ENCODE measurements at regions of chr7 and their contacts with region 1.

Region 1: DNA sequence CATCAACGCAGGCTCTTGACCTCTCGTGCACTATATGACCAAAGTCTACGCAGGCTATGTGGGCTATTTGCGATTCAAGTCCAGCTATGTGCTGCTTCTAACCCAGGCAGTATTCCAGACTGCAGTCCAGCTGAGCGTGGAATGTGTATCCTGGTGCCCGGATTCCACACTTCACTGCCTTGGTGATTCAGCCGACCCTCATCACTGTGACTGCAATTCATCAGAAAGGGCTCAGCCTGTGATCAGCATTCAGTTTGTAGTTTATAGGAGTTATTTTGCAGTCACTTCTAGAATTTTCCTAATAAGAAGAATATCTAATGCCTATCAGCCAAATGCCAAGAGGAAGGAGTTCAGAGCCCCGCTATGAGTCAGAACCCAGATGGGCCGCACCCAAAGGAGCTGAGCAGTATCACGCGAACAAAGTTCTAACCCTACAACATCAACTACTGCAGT is 119.8 kb upstream of the LANCL2 start:
- DNase-seq: peak; percentile 93
- ATAC-seq: peak; percentile 77
- H3K4me3 ChIP-seq: no peak overlapping the region
- H3K27ac ChIP-seq: no peak overlapping the region
- H3K4me1 ChIP-seq: peaks cover 6% of the 10 kb centered on the region
- H3K27me3 ChIP-seq: no peaks in the 10 kb centered on the region
- CTCF ChIP-seq: no peak
- POLR2A ChIP-seq: no peak
- RAD21 ChIP-seq: no peak

Region 2: DNA sequence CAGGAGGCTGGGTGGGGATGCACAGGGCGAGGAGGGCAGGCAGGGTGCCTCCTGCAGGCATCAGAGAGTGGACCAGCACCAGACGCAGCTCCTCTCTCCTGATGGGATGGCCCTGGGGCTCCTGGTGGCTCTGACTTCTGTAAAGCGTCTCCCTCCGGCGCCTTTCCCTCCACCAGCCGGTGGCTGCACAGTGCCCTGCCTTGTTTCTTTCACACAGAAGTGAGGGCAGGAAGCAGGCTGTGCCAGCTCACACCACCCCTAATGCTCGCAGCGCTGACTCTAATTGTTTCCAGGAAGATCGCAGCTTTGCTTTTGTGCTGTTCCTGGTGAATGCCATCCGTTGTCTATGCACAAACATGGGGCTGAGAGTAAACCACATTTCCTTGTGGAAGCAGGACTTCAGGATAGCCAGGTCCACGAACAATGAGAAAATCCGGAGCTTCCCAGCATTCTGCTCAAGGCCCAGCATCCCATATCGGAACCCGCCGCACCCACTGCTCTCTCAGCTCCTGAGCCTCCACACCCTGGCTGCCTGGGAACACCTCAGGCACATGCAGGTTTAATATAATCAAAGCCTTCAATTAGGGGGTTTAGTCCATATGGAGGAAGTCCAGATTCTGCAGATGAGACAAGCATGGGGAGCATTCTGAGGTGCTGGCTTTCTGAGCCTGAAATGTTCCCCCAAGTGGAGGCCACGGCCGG is 32.3 kb before region 1 on chr7:
- CTCF ChIA-PET with region 1: no interaction called
- POLR2A ChIA-PET with region 1: no interaction called
- dilution Hi-C with region 1: no loop called
- in situ Hi-C with region 1: no loop called
- intact Hi-C with region 1: loop called (anchors 5 kb)
- DNase-seq: no peak
- ATAC-seq: no peak
- H3K4me3 ChIP-seq: no peak overlapping the region
- H3K27ac ChIP-seq: no peak overlapping the region
- H3K4me1 ChIP-seq: peaks cover 24% of the 10 kb centered on the region
- H3K27me3 ChIP-seq: no peaks in the 10 kb centered on the region
- CTCF ChIP-seq: no peak
- POLR2A ChIP-seq: no peak
- RAD21 ChIP-seq: no peak